ENCODE measurements at regions of chr3 and their contacts with region 1.

Region 1: DNA sequence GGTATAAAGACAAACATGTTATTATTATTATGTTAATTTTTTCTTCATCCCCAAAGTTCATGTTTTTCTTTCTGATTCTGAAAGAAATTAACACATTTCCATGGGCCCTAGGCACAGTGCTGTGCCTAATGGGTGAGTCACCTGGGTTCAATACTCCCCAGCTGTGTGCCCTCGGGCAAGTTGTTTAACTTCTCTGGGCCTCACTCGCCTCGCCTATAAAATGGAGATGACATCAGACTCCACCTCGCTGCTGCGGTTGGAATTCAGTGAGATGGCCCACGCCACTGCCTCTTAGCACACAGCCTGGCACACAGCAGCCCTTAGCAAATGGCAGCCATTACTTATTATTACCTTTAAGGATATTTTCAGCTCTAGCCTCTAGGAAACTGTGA is 22.6 kb downstream of the DNASE1L3 start:
- H3K4me3 ChIP-seq: no peak overlapping the region
- H3K27ac ChIP-seq: no peak overlapping the region
- H3K4me1 ChIP-seq: no peaks in the 10 kb centered on the region; the same call in 1 of the 2 replicates
- CTCF ChIP-seq: no peak

Region 2: GRCh38 chr3:58177747-58178527 is 10.2 kb before region 1 on chr3:
- CTCF ChIA-PET with region 1: interaction called, 25 read pairs
- POLR2A ChIA-PET with region 1: no interaction called
- H3K4me3 ChIP-seq: peak overlapping the region; percentile 22
- H3K27ac ChIP-seq: no peak overlapping the region
- H3K4me1 ChIP-seq: no peaks in the 10 kb centered on the region
- CTCF ChIP-seq: peak; percentile 71; the same call in 1 of the 2 replicates

Region 3: GRCh38 chr3:58217209-58217811 is 29.1 kb after region 1 on chr3:
- CTCF ChIA-PET with region 1: interaction called, 25 read pairs
- POLR2A ChIA-PET with region 1: no interaction called
- H3K4me3 ChIP-seq: no peak overlapping the region
- H3K27ac ChIP-seq: no peak overlapping the region
- H3K4me1 ChIP-seq: no peaks in the 10 kb centered on the region
- CTCF ChIP-seq: no peak

Region 4: DNA sequence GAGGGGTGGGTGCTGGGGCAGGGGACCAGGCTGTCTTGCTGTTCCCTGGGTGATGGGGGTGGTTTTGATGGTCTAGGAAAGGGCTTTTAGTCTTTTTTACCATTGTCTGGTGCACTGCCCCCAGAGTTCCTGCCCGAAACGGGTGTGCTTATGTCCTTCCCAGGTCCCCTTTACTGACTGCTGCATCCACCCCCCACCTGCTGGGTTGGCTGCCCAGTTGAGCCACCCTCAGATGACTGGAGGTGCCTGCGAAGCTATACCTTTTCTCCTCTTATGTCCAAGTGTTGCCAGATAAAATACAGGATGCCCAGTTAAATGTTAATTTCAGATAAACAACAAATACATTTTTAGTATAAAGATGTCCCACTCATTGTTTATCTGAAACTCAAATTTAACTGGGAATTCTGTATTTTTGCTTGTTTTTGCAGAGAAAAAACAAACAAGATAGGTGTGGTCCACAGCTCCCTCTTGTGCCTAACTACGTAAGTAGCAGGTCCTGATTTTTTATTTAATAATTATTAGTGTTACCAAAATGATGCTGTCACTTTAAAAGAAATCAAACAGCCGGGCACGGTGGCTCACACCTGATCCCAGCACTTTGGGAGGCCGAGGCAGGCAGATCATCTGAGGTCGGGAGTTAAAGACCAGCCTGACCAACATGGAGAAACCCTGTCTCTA is 111.8 kb after region 1 on chr3:
- CTCF ChIA-PET with region 1: interaction called, 55 read pairs
- POLR2A ChIA-PET with region 1: no interaction called
- H3K4me3 ChIP-seq: no peak overlapping the region
- H3K27ac ChIP-seq: no peak overlapping the region
- H3K4me1 ChIP-seq: no peaks in the 10 kb centered on the region
- CTCF ChIP-seq: no peak; the same call in 1 of the 2 replicates

Region 5: DNA sequence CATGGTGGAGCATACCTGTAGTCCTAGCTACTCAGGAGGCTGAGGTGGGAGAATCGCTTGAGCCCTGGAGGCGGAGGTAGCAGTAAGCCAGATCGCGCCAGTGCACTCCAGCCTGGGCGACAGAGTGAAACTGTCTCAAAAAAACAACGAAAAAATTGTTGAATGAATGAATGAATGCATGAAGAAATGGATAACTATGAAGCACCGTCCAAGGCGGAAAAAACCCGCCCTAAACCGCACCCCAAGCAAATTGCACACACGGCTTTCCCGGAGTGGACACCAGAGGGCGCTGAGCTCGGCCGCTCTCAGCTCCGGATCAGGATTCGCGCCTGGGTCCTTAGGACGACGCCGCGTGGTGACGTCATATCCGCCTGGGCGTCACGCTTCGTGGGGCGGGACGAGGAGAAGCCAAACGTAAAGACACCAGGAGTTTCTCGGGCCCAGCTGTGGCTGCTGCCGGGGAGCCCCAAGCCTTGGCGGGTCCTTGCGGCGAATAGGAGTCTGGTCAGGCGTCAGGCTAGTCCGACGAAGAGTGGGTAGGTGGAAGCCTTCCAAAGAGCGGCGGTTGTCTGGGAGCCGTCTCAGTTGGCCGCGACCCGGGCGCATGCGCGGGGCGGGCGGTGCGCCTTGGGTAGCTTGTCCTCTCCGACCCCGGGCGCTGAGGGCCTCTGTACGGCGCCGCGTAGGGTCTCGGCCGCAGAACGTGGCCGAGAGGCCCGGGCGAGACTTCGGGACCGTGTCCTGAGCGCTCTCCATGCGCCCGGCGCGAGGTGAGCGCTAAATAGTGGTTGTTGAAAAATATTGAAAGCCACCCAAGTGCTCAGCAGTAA is 117.9 kb after region 1 on chr3 and contains the starts of genes HTD2 and RPP14:
- CTCF ChIA-PET with region 1: interaction called, 55 read pairs
- POLR2A ChIA-PET with region 1: interaction called, 7 read pairs
- H3K4me3 ChIP-seq: peak within 1 kb of the TSS; percentile 90
- H3K27ac ChIP-seq: peak within 1 kb of the TSS; percentile 76
- H3K4me1 ChIP-seq: no peaks in the 10 kb centered on the region
- CTCF ChIP-seq: peak; percentile 86; the same call in 1 of the 2 replicates

Measured in HEK293 (cell line).